ENCODE measurements at regions of chr4 and their contacts with region 1.

Region 1: GRCh38 chr4:184250795-184251669 is 33.4 kb upstream of the ENPP6 start:
- DNase-seq: peak in 1 of 2 experiments; percentile 46
- H3K4me3 ChIP-seq: no peak overlapping the region
- H3K27ac ChIP-seq: no peak overlapping the region
- H3K4me1 ChIP-seq: no peaks in the 10 kb centered on the region
- H3K27me3 ChIP-seq: no peaks in the 10 kb centered on the region
- CTCF ChIP-seq: peak in 2 of 3 experiments; percentile 49 to 50; a peak in 2 of 4 replicates
- EP300 ChIP-seq: no peak
- POLR2A ChIP-seq: no peak
- RAD21 ChIP-seq: peak; percentile 62 to 71

Region 2: GRCh38 chr4:184024647-184025046 is 226.4 kb before region 1 on chr4:
- CTCF ChIA-PET with region 1: no interaction called
- POLR2A ChIA-PET with region 1: no interaction called
- DNase-seq: no peak
- H3K4me3 ChIP-seq: no peak overlapping the region
- H3K27ac ChIP-seq: no peak overlapping the region
- H3K4me1 ChIP-seq: peaks cover 0 to 5% (median 0%) of the 10 kb centered on the region in 4 experiments; a peak in 1 of 7 replicates
- H3K27me3 ChIP-seq: peaks cover 0 to 1% (median 0%) of the 10 kb centered on the region in 4 experiments; a peak in 1 of 7 replicates
- CTCF ChIP-seq: no peak
- EP300 ChIP-seq: no peak
- POLR2A ChIP-seq: no peak
- RAD21 ChIP-seq: no peak

Region 3: GRCh38 chr4:184237612-184238011 is 13.4 kb before region 1 on chr4:
- CTCF ChIA-PET with region 1: interaction called, 10 read pairs
- POLR2A ChIA-PET with region 1: no interaction called
- DNase-seq: no peak
- H3K4me3 ChIP-seq: no peak overlapping the region
- H3K27ac ChIP-seq: no peak overlapping the region
- H3K4me1 ChIP-seq: no peaks in the 10 kb centered on the region
- H3K27me3 ChIP-seq: no peaks in the 10 kb centered on the region
- CTCF ChIP-seq: no peak
- EP300 ChIP-seq: no peak
- POLR2A ChIP-seq: no peak
- RAD21 ChIP-seq: no peak

Region 4: GRCh38 chr4:184263910-184264732 is 13.1 kb after region 1 on chr4:
- CTCF ChIA-PET with region 1: interaction called, 37 read pairs
- POLR2A ChIA-PET with region 1: no interaction called
- DNase-seq: peak; percentile 65 to 94
- H3K4me3 ChIP-seq: no peak overlapping the region
- H3K27ac ChIP-seq: no peak overlapping the region
- H3K4me1 ChIP-seq: peaks cover 0 to 5% (median 0%) of the 10 kb centered on the region in 4 experiments; a peak in 4 of 7 replicates
- H3K27me3 ChIP-seq: no peaks in the 10 kb centered on the region
- CTCF ChIP-seq: peak; percentile 50 to 93 (median 82)
- EP300 ChIP-seq: no peak
- POLR2A ChIP-seq: no peak
- RAD21 ChIP-seq: peak; percentile 86 to 92

Region 5: DNA sequence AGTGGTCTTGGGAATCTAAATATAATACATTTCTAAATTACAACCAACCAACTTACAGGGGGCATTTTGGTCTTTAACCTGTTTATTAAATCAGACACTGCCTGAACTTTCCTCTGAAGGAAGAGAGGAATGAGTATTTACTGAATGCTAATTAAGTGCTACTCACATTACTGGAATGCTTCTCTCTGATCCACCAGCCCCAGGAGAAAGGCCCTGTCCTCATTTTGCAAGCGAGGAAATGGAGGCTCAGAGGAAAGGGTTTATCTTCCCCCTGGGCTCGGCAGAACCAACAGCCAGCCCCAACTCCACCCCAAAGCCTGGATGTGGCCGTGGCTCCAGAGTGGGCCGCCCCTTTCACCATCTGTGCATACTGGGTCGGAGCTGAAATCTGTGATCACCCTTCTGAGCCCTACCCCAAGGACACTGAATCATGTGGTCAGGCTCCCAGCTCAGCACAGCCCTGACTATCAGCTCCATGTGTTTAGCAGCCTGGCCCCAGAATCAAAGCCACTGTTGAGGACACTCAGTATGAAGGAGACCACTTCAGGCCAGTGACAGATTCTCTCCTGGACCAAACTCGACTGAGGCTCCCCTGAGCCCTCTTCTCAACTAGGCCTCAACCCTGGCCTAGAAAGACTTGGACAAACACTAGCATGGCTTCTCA is 23.4 kb after region 1 on chr4:
- CTCF ChIA-PET with region 1: no interaction called
- POLR2A ChIA-PET with region 1: no interaction called
- DNase-seq: no peak
- H3K4me3 ChIP-seq: no peak overlapping the region
- H3K27ac ChIP-seq: no peak overlapping the region
- H3K4me1 ChIP-seq: no peaks in the 10 kb centered on the region; a peak in 1 of 7 replicates
- H3K27me3 ChIP-seq: no peaks in the 10 kb centered on the region
- CTCF ChIP-seq: no peak
- EP300 ChIP-seq: no peak
- POLR2A ChIP-seq: no peak
- RAD21 ChIP-seq: no peak

Measured in H1 (cell line).